CD8-positive, alpha-beta memory T cell (primary cell): ENCODE measurements at regions of chr14 and their contacts with region 1.

Region 1: GRCh38 chr14:24108336-24108874 is 6.2 kb upstream of the DCAF11 start:
- DNase-seq: no peak
- H3K4me3 ChIP-seq: no peak overlapping the region
- H3K4me3 Mint-ChIP-seq: peak overlapping the region in 2 of 7 donors; percentile 4 to 56
- H3K27ac ChIP-seq: no peak overlapping the region
- H3K27ac Mint-ChIP-seq: peak overlapping the region; percentile 79 to 97 (median 94)
- H3K4me1 ChIP-seq: peaks cover 15% of the 10 kb centered on the region
- H3K4me1 Mint-ChIP-seq: peaks cover 9 to 14% (median 10%) of the 10 kb centered on the region in 3 donors
- H3K27me3 ChIP-seq: no peaks in the 10 kb centered on the region
- H3K27me3 Mint-ChIP-seq: no peaks in the 10 kb centered on the region

Region 2: DNA sequence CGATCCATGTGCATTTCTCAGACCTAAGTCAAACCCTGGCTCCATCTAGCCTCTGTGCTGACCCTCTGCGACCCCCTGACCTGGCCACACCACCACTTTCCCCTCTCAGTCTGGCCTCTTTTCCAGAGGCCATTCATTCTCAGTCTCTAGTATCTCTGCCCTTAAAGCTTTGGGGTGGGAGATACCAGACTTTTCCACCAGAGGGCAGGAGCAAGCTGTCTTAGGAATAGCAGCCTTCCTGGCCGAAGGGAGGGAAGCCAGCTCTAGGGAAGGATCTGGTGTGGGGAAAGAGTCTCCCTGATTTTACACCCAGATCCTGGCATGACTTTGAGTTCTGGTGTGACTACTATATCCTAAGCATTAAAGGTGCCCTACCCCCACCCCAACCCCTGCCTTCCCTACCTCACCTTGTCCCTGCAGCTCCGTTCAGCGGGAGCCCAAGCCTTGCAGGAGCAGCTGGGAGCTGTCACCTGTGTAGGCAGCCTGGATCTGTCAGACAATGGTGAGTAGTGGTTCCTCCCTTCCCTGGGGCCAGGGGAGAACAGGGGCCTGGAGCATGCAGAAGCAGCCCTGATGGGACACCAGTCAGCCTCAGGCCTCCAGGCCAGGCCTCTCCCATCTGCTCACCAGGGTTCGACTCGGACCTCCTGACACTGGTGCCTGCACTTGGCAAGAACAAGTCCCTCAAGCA is 50.0 kb before region 1 on chr14:
- CTCF ChIA-PET with region 1: interaction called, 114 read pairs
- POLR2A ChIA-PET with region 1: interaction called, 5 read pairs
- DNase-seq: peak; percentile 43 to 67 (median 52)
- H3K4me3 ChIP-seq: no peak overlapping the region
- H3K4me3 Mint-ChIP-seq: peak overlapping the region in 1 of 7 donors; percentile 22
- H3K27ac ChIP-seq: no peak overlapping the region
- H3K27ac Mint-ChIP-seq: peak overlapping the region in 3 of 8 donors; percentile 65 to 86 (median 85)
- H3K4me1 ChIP-seq: no peaks in the 10 kb centered on the region
- H3K4me1 Mint-ChIP-seq: peaks cover 3 to 8% (median 4%) of the 10 kb centered on the region in 3 donors
- H3K27me3 ChIP-seq: no peaks in the 10 kb centered on the region
- H3K27me3 Mint-ChIP-seq: peaks cover 0 to 1% of the 10 kb centered on the region in 2 donors

Region 3: DNA sequence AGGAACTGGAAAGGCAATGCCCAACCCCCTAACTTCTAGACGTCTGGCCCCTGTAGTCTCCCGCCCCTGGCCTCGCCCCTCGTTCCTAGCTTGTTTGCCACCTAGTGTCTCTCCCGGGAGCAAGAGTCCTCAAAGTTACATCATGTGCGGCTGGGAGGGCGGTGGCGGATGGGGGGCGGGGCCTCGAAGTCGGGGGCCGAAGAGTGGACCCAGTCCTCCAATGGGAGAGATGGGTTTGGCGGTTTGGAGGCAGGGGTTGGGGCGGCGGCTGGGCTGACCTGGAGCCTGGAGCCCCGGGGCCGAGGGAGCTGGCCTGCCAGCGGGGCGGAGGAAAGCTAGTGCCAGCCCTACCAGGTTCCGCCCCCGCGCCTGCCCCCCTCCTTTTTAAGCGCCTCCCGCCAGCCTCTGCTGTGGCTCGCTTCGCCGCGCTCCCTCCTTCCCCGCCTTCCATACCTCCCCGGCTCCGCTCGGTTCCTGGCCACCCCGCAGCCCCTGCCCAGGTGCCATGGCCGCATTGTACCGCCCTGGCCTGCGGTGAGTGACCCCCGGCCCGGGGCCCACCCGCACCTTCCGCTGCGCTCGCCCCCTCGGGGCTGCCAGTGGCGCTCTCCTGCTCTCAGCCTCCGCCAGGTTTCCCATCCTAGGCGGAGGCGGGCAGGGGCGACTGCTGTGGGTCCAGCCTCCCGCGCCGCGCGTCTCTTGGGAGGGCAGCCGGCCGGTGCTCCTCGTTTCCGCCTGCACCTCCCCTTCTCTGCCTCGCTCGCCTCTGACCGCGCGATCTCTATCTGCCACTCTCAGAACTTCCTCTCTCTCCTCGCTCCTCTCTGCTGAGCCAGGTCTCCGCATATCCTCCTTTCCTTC is 14.3 kb before region 1 on chr14 and contains the start of gene PCK2:
- CTCF ChIA-PET with region 1: interaction called, 185 read pairs
- POLR2A ChIA-PET with region 1: interaction called, 29 read pairs
- DNase-seq: peak; percentile 63 to 77 (median 67)
- H3K4me3 ChIP-seq: peak within 1 kb of the TSS; percentile 93
- H3K4me3 Mint-ChIP-seq: peak within 1 kb of the TSS; percentile 93 to 99 (median 97)
- H3K27ac ChIP-seq: peak within 1 kb of the TSS; percentile 83
- H3K27ac Mint-ChIP-seq: peak within 1 kb of the TSS; percentile 65 to 98 (median 95)
- H3K4me1 ChIP-seq: peaks cover 16% of the 10 kb centered on the region
- H3K4me1 Mint-ChIP-seq: peaks cover 28 to 37% (median 37%) of the 10 kb centered on the region in 3 donors
- H3K27me3 ChIP-seq: no peaks in the 10 kb centered on the region
- H3K27me3 Mint-ChIP-seq: no peaks in the 10 kb centered on the region
- total RNA-seq, gene PCK2: 79.6 to 88.3 TPM

Region 4: GRCh38 chr14:24135834-24136542 is 27.6 kb after region 1 on chr14 and contains the start of gene PSME1:
- CTCF ChIA-PET with region 1: interaction called, 28 read pairs
- POLR2A ChIA-PET with region 1: interaction called, 58 read pairs
- DNase-seq: peak; percentile 91 to 95 (median 93)
- H3K4me3 ChIP-seq: peak within 1 kb of the TSS; percentile 73
- H3K4me3 Mint-ChIP-seq: peak within 1 kb of the TSS; percentile 89 to 96 (median 92)
- H3K27ac ChIP-seq: peak within 1 kb of the TSS; percentile 72
- H3K27ac Mint-ChIP-seq: peak within 1 kb of the TSS; percentile 87 to 97 (median 95)
- H3K4me1 ChIP-seq: peaks cover 47% of the 10 kb centered on the region
- H3K4me1 Mint-ChIP-seq: peaks cover 56 to 67% (median 60%) of the 10 kb centered on the region in 3 donors
- H3K27me3 ChIP-seq: no peaks in the 10 kb centered on the region
- H3K27me3 Mint-ChIP-seq: no peaks in the 10 kb centered on the region
- total RNA-seq, gene PSME1: 343 to 347 TPM